ENCODE measurements at regions of chr9 and their contacts with region 1.

Region 1: DNA sequence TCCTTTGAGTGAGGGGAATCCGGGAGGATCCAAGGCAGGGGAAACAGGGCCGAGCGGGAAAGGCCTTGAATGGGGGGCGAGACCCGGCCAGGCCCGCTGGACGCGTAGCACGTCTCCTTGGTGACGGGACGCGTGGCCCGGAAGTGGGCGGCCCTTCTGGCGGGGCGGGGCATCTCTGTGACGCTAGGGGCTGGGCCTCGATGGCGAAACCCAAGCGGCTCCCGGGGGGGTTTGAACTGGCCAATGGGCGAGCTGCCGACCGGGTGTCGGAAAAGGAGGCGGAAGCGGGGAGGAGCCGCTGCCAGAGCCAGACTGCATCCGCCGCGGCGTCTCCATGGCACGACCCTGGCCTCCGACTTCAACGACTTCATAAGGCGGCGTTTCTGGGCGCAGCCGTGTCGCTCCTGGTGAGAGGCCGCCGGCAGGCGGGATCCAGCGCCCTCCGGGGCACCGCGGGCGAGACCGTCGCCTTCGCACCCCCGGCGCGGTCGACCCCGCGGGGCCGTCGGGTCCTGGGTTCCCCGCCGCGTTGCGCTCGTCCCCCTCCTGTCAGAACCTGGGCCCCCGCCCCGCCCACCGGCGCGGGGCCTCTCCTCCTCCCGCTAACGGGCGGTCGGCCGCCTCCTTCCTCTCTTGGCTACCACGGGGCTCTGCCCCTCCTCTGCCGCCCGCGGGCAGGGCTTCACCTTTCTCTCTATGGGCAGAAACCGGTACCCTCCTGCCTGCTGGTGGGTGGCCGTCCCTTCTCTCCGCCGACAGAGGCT is at the start of gene ODF2:
- DNase-seq: peak; percentile 96 to 99 (median 98)
- ATAC-seq: peak; percentile 94
- H3K4me3 ChIP-seq: peak within 1 kb of the TSS; percentile 87
- H3K4me3 Mint-ChIP-seq: peak within 1 kb of the TSS; percentile 85 to 94 (median 90)
- H3K27ac ChIP-seq: peak within 1 kb of the TSS; percentile 88
- H3K27ac Mint-ChIP-seq: peak within 1 kb of the TSS; percentile 76 to 94 (median 90)
- H3K4me1 ChIP-seq: peaks cover 7 to 9% of the 10 kb centered on the region in 2 donors
- H3K4me1 Mint-ChIP-seq: peaks cover 15 to 27% (median 20%) of the 10 kb centered on the region in 7 donors
- H3K27me3 ChIP-seq: no peaks in the 10 kb centered on the region
- H3K27me3 Mint-ChIP-seq: no peaks in the 10 kb centered on the region
- total RNA-seq, gene ODF2: 25.0 to 52.8 (median 30.2) TPM

Region 2: DNA sequence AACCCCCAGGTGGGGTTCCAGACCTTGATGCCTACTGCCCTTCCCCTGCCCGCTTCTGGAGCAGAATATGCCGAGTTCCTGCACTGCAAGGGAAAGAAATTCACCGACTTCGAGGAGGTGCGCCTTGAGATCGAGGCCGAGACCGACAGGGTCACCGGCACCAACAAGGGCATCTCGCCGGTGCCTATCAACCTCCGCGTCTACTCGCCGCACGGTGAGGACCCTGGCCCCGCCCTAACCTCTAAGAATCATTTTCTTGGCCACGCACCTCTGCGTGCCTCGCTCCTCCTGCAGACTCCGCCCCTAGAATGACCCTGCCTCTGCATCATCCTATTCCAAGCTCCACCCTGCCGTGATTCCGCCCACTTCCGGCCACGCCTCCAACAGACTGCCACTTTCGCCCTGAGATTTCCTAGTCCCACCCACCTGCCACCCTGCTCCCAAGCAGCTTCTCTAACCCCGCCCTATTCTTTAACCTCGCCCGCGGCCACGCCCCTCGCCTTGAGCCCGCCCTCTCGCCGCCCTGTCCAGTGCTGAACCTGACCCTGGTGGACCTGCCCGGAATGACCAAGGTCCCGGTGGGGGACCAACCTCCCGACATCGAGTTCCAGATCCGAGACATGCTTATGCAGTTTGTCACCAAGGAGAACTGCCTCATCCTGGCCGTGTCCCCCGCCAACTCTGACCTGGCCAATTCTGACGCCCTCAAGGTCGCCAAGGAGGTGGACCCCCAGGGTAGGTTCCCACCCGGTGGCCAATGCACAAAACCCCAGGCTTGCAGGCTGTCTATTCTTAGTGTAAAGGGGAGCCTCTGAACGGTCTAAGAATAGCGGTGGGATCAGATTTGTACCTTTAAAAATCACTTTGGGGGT is 237.3 kb before region 1 on chr9:
- CTCF ChIA-PET with region 1: no interaction called
- POLR2A ChIA-PET with region 1: no interaction called
- intact Hi-C with region 1: loop called in 1 of 2 experiments (anchors 1 kb)
- DNase-seq: peak; percentile 70 to 93 (median 89)
- ATAC-seq: peak; percentile 98
- H3K4me3 ChIP-seq: peak overlapping the region; percentile 62
- H3K4me3 Mint-ChIP-seq: peak overlapping the region; percentile 80 to 93 (median 83)
- H3K27ac ChIP-seq: peak overlapping the region; percentile 47
- H3K27ac Mint-ChIP-seq: peak overlapping the region; percentile 18 to 93 (median 65)
- H3K4me1 ChIP-seq: peaks cover 5 to 7% of the 10 kb centered on the region in 2 donors
- H3K4me1 Mint-ChIP-seq: peaks cover 9 to 13% (median 12%) of the 10 kb centered on the region in 7 donors
- H3K27me3 ChIP-seq: no peaks in the 10 kb centered on the region
- H3K27me3 Mint-ChIP-seq: peaks cover 0 to 8% (median 0%) of the 10 kb centered on the region in 5 donors

Region 3: GRCh38 chr9:128361986-128362646 is 93.9 kb before region 1 on chr9:
- CTCF ChIA-PET with region 1: no interaction called
- POLR2A ChIA-PET with region 1: no interaction called
- intact Hi-C with region 1: loop called in 1 of 2 experiments (anchors 2 kb)
- DNase-seq: peak; percentile 48 to 69 (median 64)
- ATAC-seq: peak; percentile 94
- H3K4me3 ChIP-seq: peak overlapping the region; percentile 61
- H3K4me3 Mint-ChIP-seq: peak overlapping the region; percentile 68 to 92 (median 87)
- H3K27ac ChIP-seq: peak overlapping the region; percentile 48
- H3K27ac Mint-ChIP-seq: peak overlapping the region in 6 of 9 donors; percentile 57 to 81 (median 74)
- H3K4me1 ChIP-seq: peaks cover 5 to 9% of the 10 kb centered on the region in 2 donors
- H3K4me1 Mint-ChIP-seq: peaks cover 0 to 22% (median 6%) of the 10 kb centered on the region in 7 donors
- H3K27me3 ChIP-seq: no peaks in the 10 kb centered on the region
- H3K27me3 Mint-ChIP-seq: no peaks in the 10 kb centered on the region

Region 4: DNA sequence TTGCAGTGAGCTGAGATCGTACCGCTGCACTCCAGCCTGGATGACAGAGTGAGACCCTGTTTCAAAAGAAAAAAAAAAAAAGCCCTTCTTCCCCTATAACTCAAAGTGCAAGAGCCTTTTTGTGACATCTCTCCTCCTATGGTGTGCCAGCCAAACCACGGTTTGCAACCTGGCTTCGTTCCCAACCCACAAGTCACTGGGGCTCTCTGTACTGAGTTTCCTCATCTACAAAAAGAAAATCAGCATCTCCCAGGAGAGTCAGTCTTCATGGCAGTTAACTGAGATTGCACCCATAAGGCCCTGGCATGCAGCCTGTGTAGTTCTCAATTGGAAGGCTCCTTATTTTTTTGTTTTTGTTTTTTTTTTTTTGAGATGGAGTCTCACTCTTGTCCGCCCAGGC is 14.5 kb after region 1 on chr9:
- CTCF ChIA-PET with region 1: no interaction called
- POLR2A ChIA-PET with region 1: no interaction called
- intact Hi-C with region 1: no loop called
- DNase-seq: peak in 4 of 9 donors; percentile 18 to 36 (median 29)
- ATAC-seq: peak; percentile 44
- H3K4me3 ChIP-seq: no peak overlapping the region
- H3K4me3 Mint-ChIP-seq: peak overlapping the region in 3 of 10 donors; percentile 24 to 60 (median 42)
- H3K27ac ChIP-seq: no peak overlapping the region
- H3K27ac Mint-ChIP-seq: peak overlapping the region in 3 of 9 donors; percentile 53 to 62 (median 61)
- H3K4me1 ChIP-seq: peaks cover 0 to 4% of the 10 kb centered on the region in 2 donors
- H3K4me1 Mint-ChIP-seq: peaks cover 0 to 11% (median 4%) of the 10 kb centered on the region in 7 donors
- H3K27me3 ChIP-seq: no peaks in the 10 kb centered on the region
- H3K27me3 Mint-ChIP-seq: no peaks in the 10 kb centered on the region

Region 5: DNA sequence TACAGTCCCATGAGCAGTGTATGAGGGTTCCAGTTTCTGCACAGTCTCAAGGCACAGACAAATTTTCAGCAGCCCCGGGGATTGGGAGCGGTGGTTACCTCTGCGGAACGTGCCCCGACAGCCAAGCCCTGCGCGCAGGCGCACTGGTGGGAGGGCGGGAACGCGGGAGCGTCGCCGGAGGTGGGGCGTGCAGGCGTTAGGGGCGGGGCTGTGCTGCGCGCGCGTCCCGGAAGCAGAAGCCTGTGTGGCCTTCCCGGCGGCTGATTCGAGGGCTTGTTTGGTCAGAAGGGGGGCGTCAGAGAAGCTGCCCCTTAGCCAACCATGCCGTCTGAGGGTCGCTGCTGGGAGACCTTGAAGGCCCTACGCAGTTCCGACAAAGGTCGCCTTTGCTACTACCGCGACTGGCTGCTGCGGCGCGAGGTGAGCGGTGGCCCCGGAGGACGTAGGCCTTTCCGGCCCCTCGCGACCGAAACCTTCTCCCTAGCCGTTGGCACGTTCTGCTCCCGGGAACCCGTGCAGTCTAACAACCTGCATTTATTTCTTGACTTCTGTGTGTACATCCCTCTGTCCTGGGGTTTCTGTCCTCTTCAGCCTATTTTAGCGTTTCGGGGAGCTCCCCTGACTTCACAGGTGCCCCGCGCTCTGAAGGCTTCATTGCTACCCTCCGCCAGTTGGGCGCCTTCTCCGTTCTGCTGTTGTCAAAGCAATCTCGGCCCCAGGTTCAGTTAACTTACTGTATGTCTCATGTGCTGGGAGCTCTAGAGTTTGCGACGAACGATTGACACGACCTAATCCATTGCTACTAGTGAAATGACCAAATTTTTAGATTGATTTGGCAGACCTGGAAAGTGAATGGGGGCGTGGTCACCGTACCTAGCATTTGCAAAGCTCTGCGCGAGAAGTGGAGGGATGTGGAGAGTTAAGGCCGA is 48.7 kb after region 1 on chr9 and contains the start of gene GLE1:
- CTCF ChIA-PET with region 1: no interaction called
- POLR2A ChIA-PET with region 1: interaction called, 4 read pairs
- intact Hi-C with region 1: loop called (anchors 1 kb)
- DNase-seq: peak; percentile 93 to 99 (median 97)
- ATAC-seq: peak; percentile 98
- H3K4me3 ChIP-seq: peak within 1 kb of the TSS; percentile 97
- H3K4me3 Mint-ChIP-seq: peak within 1 kb of the TSS; percentile 92 to 100 (median 99)
- H3K27ac ChIP-seq: peak within 1 kb of the TSS; percentile 92
- H3K27ac Mint-ChIP-seq: peak within 1 kb of the TSS; percentile 82 to 100 (median 99)
- H3K4me1 ChIP-seq: peaks cover 8 to 11% of the 10 kb centered on the region in 2 donors
- H3K4me1 Mint-ChIP-seq: peaks cover 0 to 38% (median 34%) of the 10 kb centered on the region in 7 donors
- H3K27me3 ChIP-seq: no peaks in the 10 kb centered on the region
- H3K27me3 Mint-ChIP-seq: no peaks in the 10 kb centered on the region
- total RNA-seq, gene GLE1: 14.2 to 46.5 (median 30.5) TPM

Region 6: DNA sequence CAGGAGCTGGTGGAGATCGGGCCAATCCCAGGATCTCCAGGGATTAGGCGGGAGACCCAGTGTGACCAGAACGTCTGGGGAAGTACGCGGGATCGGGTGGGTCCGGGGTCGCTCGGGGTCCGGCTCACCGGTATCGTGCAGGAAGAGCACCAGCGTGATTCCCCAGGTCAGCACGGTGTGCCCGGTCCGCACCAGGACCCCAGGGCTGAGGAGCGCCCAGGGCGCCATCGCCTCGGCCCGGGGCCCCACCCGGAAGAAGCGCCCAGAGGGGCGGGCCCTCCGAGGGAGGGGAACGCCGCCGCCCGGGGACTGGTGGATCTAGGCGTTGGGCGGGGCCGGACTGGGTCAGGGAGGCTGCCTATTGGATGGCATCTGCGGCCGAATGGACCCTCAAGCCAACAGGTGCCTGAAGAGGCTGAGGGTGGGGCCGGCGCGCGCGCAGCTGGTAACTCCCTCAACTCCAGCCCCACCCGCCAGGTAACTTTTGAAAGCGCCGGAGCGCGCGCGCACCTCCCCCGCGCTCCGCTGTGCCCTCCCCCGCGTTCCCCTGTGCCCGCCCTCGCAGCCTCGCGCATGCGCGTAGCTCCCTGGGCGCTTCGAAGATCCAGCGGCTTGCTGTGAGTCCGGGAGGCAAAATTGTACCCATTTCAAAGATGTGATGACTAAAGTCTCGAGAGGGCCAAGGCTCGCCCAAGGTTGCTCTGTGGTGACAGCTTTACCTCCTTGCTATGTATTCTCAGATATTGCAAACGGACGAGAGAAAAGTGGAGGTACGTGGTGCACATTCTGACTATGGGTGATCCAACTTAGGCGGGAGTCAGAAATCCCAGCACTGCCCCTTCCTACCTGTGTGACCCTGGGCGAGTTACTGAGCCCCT is 268.1 kb after region 1 on chr9 and contains the start of gene ZDHHC12:
- CTCF ChIA-PET with region 1: no interaction called
- POLR2A ChIA-PET with region 1: no interaction called
- intact Hi-C with region 1: loop called in 1 of 2 experiments (anchors 1 kb)
- DNase-seq: peak; percentile 96 to 99 (median 99)
- ATAC-seq: peak; percentile 97
- H3K4me3 ChIP-seq: peak within 1 kb of the TSS; percentile 97
- H3K4me3 Mint-ChIP-seq: peak within 1 kb of the TSS; percentile 85 to 97 (median 94)
- H3K27ac ChIP-seq: peak within 1 kb of the TSS; percentile 89
- H3K27ac Mint-ChIP-seq: peak within 1 kb of the TSS; percentile 85 to 96 (median 94)
- H3K4me1 ChIP-seq: peaks cover 13 to 29% of the 10 kb centered on the region in 2 donors
- H3K4me1 Mint-ChIP-seq: peaks cover 23 to 46% (median 39%) of the 10 kb centered on the region in 7 donors
- H3K27me3 ChIP-seq: no peaks in the 10 kb centered on the region
- H3K27me3 Mint-ChIP-seq: no peaks in the 10 kb centered on the region
- total RNA-seq, gene ZDHHC12: 21.2 to 70.3 (median 25.7) TPM

Region 7: DNA sequence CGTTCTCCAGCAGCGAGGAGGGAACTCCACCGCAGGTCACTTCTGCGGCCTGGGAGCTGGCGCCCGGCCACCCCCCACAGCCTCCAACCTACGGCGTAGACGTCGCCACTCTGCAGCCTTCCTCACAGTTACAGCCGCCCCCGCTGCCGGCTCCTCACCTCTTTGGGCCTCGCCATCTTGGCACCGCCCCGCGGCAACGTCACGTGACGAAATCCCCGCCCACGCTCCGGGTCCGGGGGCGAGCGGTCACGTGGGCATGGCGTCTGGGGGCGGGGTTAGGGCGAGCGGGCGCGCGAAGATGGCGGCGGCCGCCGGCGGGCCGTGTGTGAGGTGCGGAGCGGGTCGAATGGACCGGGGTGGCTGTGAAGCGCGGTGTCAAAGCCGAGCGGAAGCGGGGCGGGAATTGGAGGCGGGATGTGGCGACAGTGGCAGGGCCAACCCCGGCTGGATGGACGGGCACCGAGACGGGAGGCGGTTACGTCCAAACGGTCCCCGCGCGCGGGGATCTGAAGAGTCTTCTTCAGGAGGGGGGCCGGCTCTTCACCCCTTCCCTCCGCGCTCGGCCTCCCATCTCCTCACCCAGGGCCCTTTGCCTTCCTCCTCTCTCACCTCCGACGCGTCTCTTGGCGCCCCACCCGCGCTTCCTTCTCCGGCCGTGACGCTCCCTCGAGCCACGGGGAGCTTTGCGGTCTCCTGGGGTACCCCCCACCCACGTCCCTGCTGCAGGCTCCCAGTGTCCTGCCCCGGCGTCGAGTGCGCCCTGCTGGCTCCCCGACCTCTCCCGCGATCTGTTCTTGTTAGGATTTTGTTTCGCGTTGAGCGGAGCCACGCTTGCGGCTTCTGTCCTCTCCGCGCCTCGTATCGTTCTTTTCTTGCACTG is 491.6 kb after region 1 on chr9 and contains the starts of genes DOLK and NUP188:
- CTCF ChIA-PET with region 1: no interaction called
- POLR2A ChIA-PET with region 1: no interaction called
- intact Hi-C with region 1: loop called (anchors 2 to 5 kb)
- DNase-seq: peak; percentile 96 to 100 (median 98)
- ATAC-seq: peak; percentile 95
- H3K4me3 ChIP-seq: peak within 1 kb of the TSS; percentile 87
- H3K4me3 Mint-ChIP-seq: peak within 1 kb of the TSS; percentile 93 to 99 (median 98)
- H3K27ac ChIP-seq: peak within 1 kb of the TSS; percentile 97
- H3K27ac Mint-ChIP-seq: peak within 1 kb of the TSS; percentile 89 to 99 (median 97)
- H3K4me1 ChIP-seq: peaks cover 8 to 14% of the 10 kb centered on the region in 2 donors
- H3K4me1 Mint-ChIP-seq: peaks cover 16 to 49% (median 32%) of the 10 kb centered on the region in 7 donors
- H3K27me3 ChIP-seq: no peaks in the 10 kb centered on the region
- H3K27me3 Mint-ChIP-seq: no peaks in the 10 kb centered on the region
- total RNA-seq, gene DOLK: 6.0 to 12.8 (median 9.5) TPM
- total RNA-seq, gene NUP188: 55.7 to 98.7 (median 63.7) TPM

Measured in naive thymus-derived CD4-positive, alpha-beta T cell (primary cell).